Pancreas (tissue), 10 donors: ENCODE measurements at regions of chr1 and their contacts with region 1.

Region 1: GRCh38 chr1:84763912-84764663 is 73.8 kb upstream of the SSX2IP start:
- DNase-seq: no peak
- ATAC-seq: no peak
- H3K4me3 ChIP-seq: no peak overlapping the region
- H3K27ac ChIP-seq: no peak overlapping the region
- H3K4me1 ChIP-seq: peaks cover 0 to 2% (median 0%) of the 10 kb centered on the region in 3 donors
- H3K27me3 ChIP-seq: no peaks in the 10 kb centered on the region
- CTCF ChIP-seq: no peak

Region 2: GRCh38 chr1:84135341-84135740 is 628.7 kb before region 1 on chr1:
- intact Hi-C with region 1: loop called in 1 of 3 experiments (anchors 5 kb)
- DNase-seq: no peak
- ATAC-seq: no peak
- H3K4me3 ChIP-seq: no peak overlapping the region
- H3K27ac ChIP-seq: no peak overlapping the region
- H3K4me1 ChIP-seq: no peaks in the 10 kb centered on the region
- H3K27me3 ChIP-seq: no peaks in the 10 kb centered on the region
- CTCF ChIP-seq: no peak

Region 3: GRCh38 chr1:84450910-84451309 is 313.2 kb before region 1 on chr1:
- intact Hi-C with region 1: loop called in 1 of 3 experiments (anchors 10 kb)
- DNase-seq: no peak
- ATAC-seq: no peak
- H3K4me3 ChIP-seq: no peak overlapping the region
- H3K27ac ChIP-seq: no peak overlapping the region
- H3K4me1 ChIP-seq: no peaks in the 10 kb centered on the region
- H3K27me3 ChIP-seq: no peaks in the 10 kb centered on the region
- CTCF ChIP-seq: no peak

Region 4: DNA sequence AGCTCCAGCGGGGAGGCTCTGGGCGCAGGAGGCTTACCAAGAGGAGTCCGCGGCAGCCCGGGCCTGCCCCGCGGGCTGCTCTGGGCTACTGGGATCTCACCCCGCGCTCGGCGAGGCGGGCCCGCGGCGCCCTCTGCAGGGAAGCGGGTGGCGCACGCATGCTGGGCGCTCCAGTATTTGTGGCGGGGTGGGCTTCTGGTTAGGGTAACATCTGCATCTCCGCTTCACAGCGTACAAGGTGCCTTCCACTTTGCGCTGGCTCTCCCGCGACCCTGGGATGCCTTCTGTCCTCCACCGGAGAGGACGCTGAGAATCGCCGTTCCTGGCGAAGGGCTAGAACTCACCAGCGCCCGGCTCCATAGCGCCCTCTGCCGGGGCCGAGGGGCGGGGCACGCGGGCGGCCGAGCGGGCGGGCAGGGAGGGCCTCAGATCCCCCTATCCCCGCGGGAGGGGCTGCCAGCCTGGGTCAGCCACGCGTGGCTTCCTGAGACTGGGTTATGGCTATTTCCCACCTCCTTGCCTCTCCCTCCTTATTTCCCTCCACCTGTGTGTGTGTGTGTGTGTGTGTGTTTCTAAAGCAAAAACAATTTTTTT is 143.3 kb before region 1 on chr1:
- intact Hi-C with region 1: loop called in 1 of 3 experiments (anchors 10 kb)
- DNase-seq: peak; percentile 61 to 92 (median 80)
- ATAC-seq: peak; percentile 94 to 96 (median 94)
- H3K4me3 ChIP-seq: peak overlapping the region; percentile 26 to 65 (median 52)
- H3K27ac ChIP-seq: peak overlapping the region in 2 of 4 donors; percentile 67 to 73
- H3K4me1 ChIP-seq: peaks cover 0 to 10% (median 5%) of the 10 kb centered on the region in 3 donors
- H3K27me3 ChIP-seq: no peaks in the 10 kb centered on the region
- CTCF ChIP-seq: peak; percentile 90 to 99 (median 98)

Region 5: GRCh38 chr1:84936116-84936810 is 172.2 kb after region 1 on chr1:
- intact Hi-C with region 1: loop called in 1 of 3 experiments (anchors 10 kb)
- DNase-seq: peak in 3 of 6 donors; percentile 30 to 51 (median 31)
- ATAC-seq: peak; percentile 93 to 99 (median 95)
- H3K4me3 ChIP-seq: no peak overlapping the region
- H3K27ac ChIP-seq: no peak overlapping the region
- H3K4me1 ChIP-seq: peaks cover 0 to 6% (median 0%) of the 10 kb centered on the region in 3 donors
- H3K27me3 ChIP-seq: no peaks in the 10 kb centered on the region
- CTCF ChIP-seq: peak; percentile 84 to 91 (median 87)